WTC11 (cell line): ENCODE measurements at regions of chr2 and their contacts with region 1.

Region 1: GRCh38 chr2:153871231-153872221 is at the start of gene GALNT13:
- DNase-seq: peak; percentile 90
- ATAC-seq: peak; percentile 89
- H3K4me3 Mint-ChIP-seq: peak within 1 kb of the TSS; percentile 88
- H3K27ac Mint-ChIP-seq: peak within 1 kb of the TSS; percentile 80; the same call in 1 of the 2 replicates
- H3K4me1 Mint-ChIP-seq: peaks cover 26% of the 10 kb centered on the region
- H3K27me3 Mint-ChIP-seq: peaks cover 37% of the 10 kb centered on the region
- CTCF ChIP-seq: no peak
- total RNA-seq, gene GALNT13: 8.5 to 9.9 TPM (median 8.8 TPM) in 3 replicates

Region 2: DNA sequence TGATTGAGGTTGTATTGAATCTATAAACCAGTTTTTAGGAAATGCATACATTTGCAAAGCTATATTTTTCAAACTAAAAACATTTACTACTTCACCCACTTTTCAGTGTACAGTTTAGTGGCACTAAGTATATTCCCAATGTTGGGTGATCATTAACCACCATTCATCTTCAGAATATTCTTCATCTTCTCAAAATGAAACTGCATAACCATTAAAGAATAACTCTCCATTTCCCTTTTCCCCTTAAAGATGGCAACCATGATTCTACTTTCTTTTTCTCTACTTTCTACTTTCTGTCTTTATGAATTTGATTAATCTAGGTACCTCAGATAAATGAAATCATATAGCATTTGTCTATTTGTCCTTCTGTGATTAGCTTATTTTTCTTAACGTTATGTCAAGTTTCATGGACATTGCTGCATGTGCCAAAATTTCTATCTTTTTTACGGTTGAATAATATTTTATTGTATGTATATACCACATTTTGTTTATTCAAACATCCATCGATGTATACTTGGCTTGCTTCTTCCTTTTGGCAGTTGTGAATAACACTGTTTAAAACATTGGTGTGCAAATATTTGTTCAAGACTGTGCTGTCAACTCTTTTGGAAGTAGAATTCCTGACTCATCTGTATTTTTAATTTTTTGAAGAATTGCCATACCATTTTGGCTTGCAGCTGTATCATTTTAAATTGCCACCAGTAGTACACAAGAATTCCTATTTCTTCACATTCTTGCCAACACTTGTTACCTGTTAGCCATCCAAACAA is 497.8 kb before region 1 on chr2:
- CTCF ChIA-PET with region 1: no interaction called
- POLR2A ChIA-PET with region 1: no interaction called
- DNase-seq: no peak
- ATAC-seq: no peak
- H3K4me3 Mint-ChIP-seq: no peak overlapping the region
- H3K27ac Mint-ChIP-seq: no peak overlapping the region
- H3K4me1 Mint-ChIP-seq: peaks cover 28% of the 10 kb centered on the region
- H3K27me3 Mint-ChIP-seq: no peaks in the 10 kb centered on the region
- CTCF ChIP-seq: no peak

Region 3: DNA sequence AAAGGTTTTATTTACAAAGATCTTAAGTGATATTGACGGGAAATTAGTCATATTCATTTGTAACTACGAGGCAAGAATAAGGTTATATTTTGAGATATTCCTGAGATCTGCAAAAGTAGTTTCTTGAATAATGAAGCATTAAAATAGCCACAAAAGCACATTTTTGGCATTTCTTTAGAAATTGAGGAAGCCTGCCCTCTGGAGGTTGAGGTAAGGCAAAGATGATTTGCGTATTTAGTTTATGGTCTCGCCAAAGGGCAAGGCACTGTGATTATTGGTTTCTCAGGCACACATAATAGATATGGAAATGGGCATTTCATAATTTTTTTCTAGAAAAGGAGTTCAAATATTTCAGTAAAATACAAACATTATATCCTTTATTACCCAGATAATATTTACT is 249.2 kb before region 1 on chr2:
- CTCF ChIA-PET with region 1: no interaction called
- POLR2A ChIA-PET with region 1: no interaction called
- DNase-seq: no peak
- ATAC-seq: no peak
- H3K4me3 Mint-ChIP-seq: no peak overlapping the region
- H3K27ac Mint-ChIP-seq: no peak overlapping the region
- H3K4me1 Mint-ChIP-seq: no peaks in the 10 kb centered on the region; the same call in 1 of the 2 replicates
- H3K27me3 Mint-ChIP-seq: no peaks in the 10 kb centered on the region
- CTCF ChIP-seq: 0 out of 2 replicates have a peak, but pooled peaks have one; percentile 26

Region 4: GRCh38 chr2:153890576-153890975 is 19.1 kb after region 1 on chr2:
- CTCF ChIA-PET with region 1: interaction called, 10 read pairs
- POLR2A ChIA-PET with region 1: no interaction called
- DNase-seq: peak; percentile 17
- ATAC-seq: peak; percentile 99
- H3K4me3 Mint-ChIP-seq: no peak overlapping the region
- H3K27ac Mint-ChIP-seq: peak overlapping the region; percentile 85
- H3K4me1 Mint-ChIP-seq: peaks cover 24% of the 10 kb centered on the region
- H3K27me3 Mint-ChIP-seq: no peaks in the 10 kb centered on the region
- CTCF ChIP-seq: no peak